ENCODE measurements at regions of chr11 and their contacts with region 1.

Region 1: GRCh38 chr11:34366522-34366921 is 8.7 kb upstream of the ABTB2 start:
- DNase-seq: no peak
- ATAC-seq: no peak
- H3K4me3 ChIP-seq: no peak overlapping the region
- H3K27ac ChIP-seq: no peak overlapping the region
- H3K4me1 ChIP-seq: peaks cover 0 to 6% (median 0%) of the 10 kb centered on the region in 9 donors
- H3K27me3 ChIP-seq: peaks cover 0 to 15% (median 0%) of the 10 kb centered on the region in 7 donors
- CTCF ChIP-seq: peak in 6 of 9 donors; percentile 18 to 48 (median 36)

Region 2: GRCh38 chr11:33857933-33858371 is 508.6 kb before region 1 on chr11:
- intact Hi-C with region 1: loop called in 1 of 10 experiments (anchors 10 kb)
- DNase-seq: peak; percentile 80 to 81
- ATAC-seq: peak; percentile 79 to 95 (median 94)
- H3K4me3 ChIP-seq: no peak overlapping the region
- H3K27ac ChIP-seq: no peak overlapping the region
- H3K4me1 ChIP-seq: peaks cover 0 to 20% (median 0%) of the 10 kb centered on the region in 9 donors
- H3K27me3 ChIP-seq: peaks cover 0 to 10% (median 0%) of the 10 kb centered on the region in 7 donors
- CTCF ChIP-seq: peak; percentile 87 to 98 (median 94)

Region 3: GRCh38 chr11:34344768-34345539 is 21.6 kb before region 1 on chr11:
- intact Hi-C with region 1: no loop called
- DNase-seq: peak in 1 of 2 donors; percentile 26
- ATAC-seq: peak in 5 of 8 donors; percentile 3 to 25 (median 21)
- H3K4me3 ChIP-seq: no peak overlapping the region
- H3K27ac ChIP-seq: peak overlapping the region in 8 of 10 donors; percentile 49 to 90 (median 79)
- H3K4me1 ChIP-seq: peaks cover 39 to 89% (median 69%) of the 10 kb centered on the region in 9 donors
- H3K27me3 ChIP-seq: no peaks in the 10 kb centered on the region
- CTCF ChIP-seq: no peak

Region 4: GRCh38 chr11:34468209-34468841 is 101.8 kb after region 1 on chr11:
- intact Hi-C with region 1: loop called in 1 of 10 experiments (anchors 10 kb)
- DNase-seq: no peak
- ATAC-seq: no peak
- H3K4me3 ChIP-seq: no peak overlapping the region
- H3K27ac ChIP-seq: no peak overlapping the region
- H3K4me1 ChIP-seq: peaks cover 0 to 10% (median 0%) of the 10 kb centered on the region in 9 donors
- H3K27me3 ChIP-seq: no peaks in the 10 kb centered on the region
- CTCF ChIP-seq: peak; percentile 27 to 73 (median 56)

Region 5: DNA sequence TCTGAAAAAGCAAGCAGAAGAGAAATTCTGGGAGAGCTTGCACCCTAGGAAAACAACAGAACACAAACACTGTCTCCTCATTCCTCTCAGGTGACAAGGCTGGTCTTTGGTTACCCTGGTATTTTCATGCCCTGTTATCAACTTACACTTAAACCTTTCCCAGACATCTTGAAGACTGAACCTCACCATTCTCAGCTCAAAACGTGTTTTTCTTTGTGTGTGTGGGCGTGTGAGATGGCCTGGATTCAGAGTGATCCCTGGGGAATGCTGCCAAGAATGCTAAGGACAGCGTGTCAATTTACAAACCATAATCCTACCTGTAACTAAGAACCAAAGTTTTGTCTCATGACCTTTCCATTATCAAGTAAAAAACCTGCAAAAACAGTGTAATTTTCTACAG is 113.8 kb after region 1 on chr11:
- intact Hi-C with region 1: loop called in 1 of 10 experiments (anchors 10 kb)
- DNase-seq: no peak
- ATAC-seq: no peak
- H3K4me3 ChIP-seq: no peak overlapping the region
- H3K27ac ChIP-seq: no peak overlapping the region
- H3K4me1 ChIP-seq: no peaks in the 10 kb centered on the region
- H3K27me3 ChIP-seq: no peaks in the 10 kb centered on the region
- CTCF ChIP-seq: no peak

Region 6: GRCh38 chr11:34492806-34493414 is 126.4 kb after region 1 on chr11:
- intact Hi-C with region 1: loop called (anchors 2 to 10 kb)
- DNase-seq: peak in 1 of 2 donors; percentile 41
- ATAC-seq: no peak
- H3K4me3 ChIP-seq: no peak overlapping the region
- H3K27ac ChIP-seq: no peak overlapping the region
- H3K4me1 ChIP-seq: no peaks in the 10 kb centered on the region
- H3K27me3 ChIP-seq: peaks cover 0 to 19% (median 7%) of the 10 kb centered on the region in 7 donors
- CTCF ChIP-seq: peak; percentile 47 to 77 (median 70)

Region 7: GRCh38 chr11:34546511-34547222 is 180.1 kb after region 1 on chr11:
- intact Hi-C with region 1: no loop called
- DNase-seq: no peak
- ATAC-seq: no peak
- H3K4me3 ChIP-seq: no peak overlapping the region
- H3K27ac ChIP-seq: no peak overlapping the region
- H3K4me1 ChIP-seq: no peaks in the 10 kb centered on the region
- H3K27me3 ChIP-seq: peaks cover 0 to 33% (median 16%) of the 10 kb centered on the region in 7 donors
- CTCF ChIP-seq: no peak